ENCODE measurements at regions of chr1 and their contacts with region 1.

Region 1: GRCh38 chr1:96966536-96967138 is 245.1 kb downstream of the PTBP2 start:
- DNase-seq: peak; percentile 76
- ATAC-seq: peak; percentile 85
- H3K4me3 ChIP-seq: no peak overlapping the region
- H3K27ac ChIP-seq: no peak overlapping the region
- H3K4me1 ChIP-seq: peaks cover 4% of the 10 kb centered on the region
- H3K27me3 ChIP-seq: no peaks in the 10 kb centered on the region
- CTCF ChIP-seq: peak; percentile 92
- POLR2A ChIP-seq: no peak
- RAD21 ChIP-seq: peak; percentile 94

Region 2: DNA sequence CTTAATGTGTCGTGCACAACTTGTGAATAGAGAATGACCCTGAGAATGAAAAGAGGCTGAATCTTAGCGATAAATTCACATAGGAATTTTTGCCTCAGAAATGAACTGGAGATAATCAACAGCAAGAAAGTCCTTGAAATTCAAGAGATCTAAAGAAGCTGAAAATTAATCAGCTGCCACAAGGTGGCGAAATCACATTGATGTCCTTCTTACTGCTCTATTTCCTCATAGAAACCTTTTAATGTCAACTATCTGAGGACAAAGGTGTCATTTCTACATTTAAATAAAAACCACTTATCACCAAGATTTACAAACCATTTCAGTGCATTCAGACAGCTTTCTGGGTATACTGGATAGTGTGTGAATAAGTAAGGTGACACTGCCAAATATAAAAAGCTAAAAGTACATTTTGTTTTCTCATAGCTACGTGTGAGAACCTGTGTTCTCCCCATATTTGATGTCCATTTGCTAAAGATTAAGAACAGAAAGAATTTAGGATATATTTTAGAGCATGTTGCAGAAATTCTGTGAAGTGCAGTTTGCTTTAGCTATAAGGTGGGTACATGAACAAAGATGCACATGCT is 730.4 kb before region 1 on chr1:
- CTCF ChIA-PET with region 1: no interaction called
- POLR2A ChIA-PET with region 1: no interaction called
- dilution Hi-C with region 1: no loop called
- in situ Hi-C with region 1: no loop called
- intact Hi-C with region 1: loop called (anchors 10 kb)
- DNase-seq: peak; percentile 75
- ATAC-seq: peak; percentile 75
- H3K4me3 ChIP-seq: no peak overlapping the region
- H3K27ac ChIP-seq: no peak overlapping the region
- H3K4me1 ChIP-seq: no peaks in the 10 kb centered on the region
- H3K27me3 ChIP-seq: no peaks in the 10 kb centered on the region
- CTCF ChIP-seq: peak; percentile 71
- POLR2A ChIP-seq: no peak
- RAD21 ChIP-seq: peak; percentile 83

Region 3: DNA sequence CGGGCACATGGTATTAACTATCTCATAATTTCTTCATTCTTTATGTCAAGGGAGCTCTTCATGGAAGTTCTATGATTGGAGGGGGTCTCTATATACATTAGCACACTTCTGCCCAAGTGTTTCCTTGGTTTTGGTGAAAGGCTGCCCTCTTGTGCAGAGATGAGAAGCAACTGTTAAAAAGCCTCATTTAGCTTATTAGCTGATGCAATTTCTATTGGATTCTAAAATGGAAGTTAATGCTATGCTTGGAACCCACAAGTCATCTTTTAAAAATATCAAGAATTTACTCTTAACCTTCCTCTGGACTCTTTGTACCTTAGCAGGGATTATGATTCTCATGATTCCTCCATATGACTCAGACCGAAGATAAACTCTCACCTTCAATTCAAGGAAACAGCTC is 83.9 kb after region 1 on chr1:
- CTCF ChIA-PET with region 1: interaction called, 6 read pairs
- POLR2A ChIA-PET with region 1: no interaction called
- dilution Hi-C with region 1: no loop called
- in situ Hi-C with region 1: no loop called
- intact Hi-C with region 1: loop called (anchors 5 kb)
- DNase-seq: peak; percentile 59
- ATAC-seq: peak; percentile 84
- H3K4me3 ChIP-seq: no peak overlapping the region
- H3K27ac ChIP-seq: no peak overlapping the region
- H3K4me1 ChIP-seq: no peaks in the 10 kb centered on the region; the same call in 1 of the 2 replicates
- H3K27me3 ChIP-seq: no peaks in the 10 kb centered on the region
- CTCF ChIP-seq: peak; percentile 53
- POLR2A ChIP-seq: no peak
- RAD21 ChIP-seq: peak; percentile 54

Region 4: GRCh38 chr1:97238816-97239215 is 272.2 kb after region 1 on chr1:
- CTCF ChIA-PET with region 1: no interaction called
- POLR2A ChIA-PET with region 1: no interaction called
- dilution Hi-C with region 1: no loop called
- in situ Hi-C with region 1: no loop called
- intact Hi-C with region 1: loop called (anchors 10 kb)
- DNase-seq: no peak
- ATAC-seq: no peak
- H3K4me3 ChIP-seq: no peak overlapping the region
- H3K27ac ChIP-seq: no peak overlapping the region
- H3K4me1 ChIP-seq: no peaks in the 10 kb centered on the region
- H3K27me3 ChIP-seq: no peaks in the 10 kb centered on the region
- CTCF ChIP-seq: no peak
- POLR2A ChIP-seq: no peak
- RAD21 ChIP-seq: no peak

Region 5: DNA sequence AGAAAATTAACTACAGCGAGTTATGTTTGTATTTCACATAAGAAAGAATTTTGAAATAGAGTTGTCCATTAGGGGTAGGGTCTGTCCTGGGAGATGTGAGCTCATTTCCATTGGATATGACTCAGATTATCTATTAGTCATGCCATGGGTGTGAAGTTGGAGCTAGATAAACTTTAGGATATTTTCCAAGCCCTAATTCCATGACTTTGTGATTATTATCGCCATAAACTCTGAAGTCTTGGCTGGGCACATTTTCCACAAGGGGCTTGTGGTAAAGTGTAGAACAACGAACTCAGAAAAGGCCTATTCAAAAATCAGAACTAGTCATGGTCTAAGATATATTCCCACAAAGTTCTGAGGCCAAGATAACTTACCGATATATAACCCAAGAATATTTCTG is 557.6 kb after region 1 on chr1:
- CTCF ChIA-PET with region 1: no interaction called
- POLR2A ChIA-PET with region 1: no interaction called
- dilution Hi-C with region 1: no loop called
- in situ Hi-C with region 1: no loop called
- intact Hi-C with region 1: loop called (anchors 10 kb)
- DNase-seq: no peak
- ATAC-seq: no peak
- H3K4me3 ChIP-seq: no peak overlapping the region
- H3K27ac ChIP-seq: no peak overlapping the region
- H3K4me1 ChIP-seq: no peaks in the 10 kb centered on the region
- H3K27me3 ChIP-seq: no peaks in the 10 kb centered on the region
- CTCF ChIP-seq: no peak
- POLR2A ChIP-seq: no peak
- RAD21 ChIP-seq: no peak

Region 6: DNA sequence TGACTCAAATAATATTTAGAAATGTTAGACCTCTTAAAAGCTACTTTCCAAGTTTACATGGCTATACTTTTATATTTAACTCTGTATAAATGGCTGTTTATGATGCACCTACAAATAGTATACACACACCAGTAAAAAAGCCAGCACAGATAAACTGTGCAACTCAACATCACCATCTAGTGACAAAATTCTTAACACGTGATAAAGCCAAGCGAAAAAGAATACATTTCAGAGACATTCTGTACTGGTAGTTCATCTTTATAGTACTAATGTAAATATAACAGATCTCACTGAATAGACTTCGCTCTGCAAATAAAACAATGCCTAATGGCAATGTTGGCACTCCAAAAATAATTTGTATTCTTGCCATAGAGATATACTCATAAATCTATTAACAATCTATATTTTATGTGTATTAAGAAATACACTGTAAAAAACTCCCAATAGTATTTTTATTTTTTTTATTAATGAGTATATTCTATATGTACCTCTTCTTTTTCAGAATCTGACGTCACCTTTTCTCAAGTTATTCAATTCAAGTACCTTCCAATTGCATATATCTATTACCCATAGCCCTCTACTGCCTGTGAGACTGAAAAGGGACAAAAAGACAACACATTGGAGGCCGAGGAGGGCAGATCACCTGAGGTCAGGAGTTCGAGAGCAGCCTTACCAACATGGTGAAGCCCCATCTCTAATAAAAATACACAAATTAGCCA is 854.0 kb after region 1 on chr1:
- CTCF ChIA-PET with region 1: interaction called, 3 read pairs
- POLR2A ChIA-PET with region 1: no interaction called
- dilution Hi-C with region 1: no loop called
- in situ Hi-C with region 1: no loop called
- intact Hi-C with region 1: loop called (anchors 1 kb)
- DNase-seq: peak; percentile 58
- ATAC-seq: peak; percentile 82
- H3K4me3 ChIP-seq: no peak overlapping the region
- H3K27ac ChIP-seq: no peak overlapping the region
- H3K4me1 ChIP-seq: no peaks in the 10 kb centered on the region
- H3K27me3 ChIP-seq: no peaks in the 10 kb centered on the region
- CTCF ChIP-seq: peak; percentile 66
- POLR2A ChIP-seq: no peak
- RAD21 ChIP-seq: peak; percentile 78

Region 7: GRCh38 chr1:98468111-98468717 is 1501.6 kb after region 1 on chr1:
- CTCF ChIA-PET with region 1: interaction called, 3 read pairs
- POLR2A ChIA-PET with region 1: no interaction called
- dilution Hi-C with region 1: no loop called
- in situ Hi-C with region 1: loop called (anchors 10 kb)
- intact Hi-C with region 1: loop called (anchors 5 kb)
- DNase-seq: peak; percentile 81
- ATAC-seq: peak; percentile 65; the same call in 1 of the 2 replicates
- H3K4me3 ChIP-seq: no peak overlapping the region
- H3K27ac ChIP-seq: no peak overlapping the region
- H3K4me1 ChIP-seq: peaks cover 2% of the 10 kb centered on the region; the same call in 1 of the 2 replicates
- H3K27me3 ChIP-seq: no peaks in the 10 kb centered on the region
- CTCF ChIP-seq: peak; percentile 96
- POLR2A ChIP-seq: no peak
- RAD21 ChIP-seq: peak; percentile 95

Measured in IMR-90 (cell line).